Tibial artery (tissue), 4 donors: ENCODE measurements at regions of chr11 and their contacts with region 1.

Region 1: GRCh38 chr11:6251120-6251733 is 8.4 kb upstream of the CCKBR start:
- DNase-seq: peak; percentile 36 to 86
- H3K4me3 ChIP-seq: no peak overlapping the region
- H3K27ac ChIP-seq: no peak overlapping the region
- H3K4me1 ChIP-seq: no peaks in the 10 kb centered on the region
- H3K27me3 ChIP-seq: peaks cover 0 to 5% of the 10 kb centered on the region in 2 donors
- CTCF ChIP-seq: peak; percentile 89 to 92

Region 2: DNA sequence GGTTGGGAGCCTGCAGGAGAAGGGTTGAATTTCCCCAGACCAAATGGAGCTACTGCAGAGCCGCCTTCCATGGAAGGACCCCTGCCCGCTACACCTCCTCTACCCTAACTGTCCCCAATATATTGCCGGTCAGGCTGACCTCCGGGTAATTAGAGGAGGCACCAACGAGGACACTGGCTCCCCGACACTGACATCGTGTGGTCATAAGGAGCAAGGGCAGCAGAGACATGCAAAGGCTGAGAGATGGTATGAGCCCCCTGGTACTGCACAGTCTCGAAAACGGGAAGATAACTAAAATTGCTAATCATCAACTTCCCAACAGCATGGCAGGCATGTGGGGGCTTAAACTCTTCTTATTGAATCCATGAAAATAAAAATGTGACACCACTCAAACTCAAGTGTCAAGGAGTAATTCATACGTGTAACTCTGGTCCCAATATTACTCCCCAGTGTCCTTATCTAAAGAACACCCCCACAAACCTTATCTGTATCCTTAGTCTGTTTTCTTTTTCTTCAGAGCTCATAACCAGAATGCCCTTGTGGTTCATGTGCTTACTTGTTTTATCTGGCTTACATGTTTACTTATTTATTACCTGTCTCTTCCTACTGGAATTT is 64.7 kb after region 1 on chr11:
- intact Hi-C with region 1: loop called (anchors 5 kb)
- DNase-seq: peak; percentile 71 to 76
- H3K4me3 ChIP-seq: peak overlapping the region; percentile 24 to 32
- H3K27ac ChIP-seq: peak overlapping the region; percentile 38 to 100
- H3K4me1 ChIP-seq: peaks cover 0 to 37% (median 24%) of the 10 kb centered on the region in 4 donors
- H3K27me3 ChIP-seq: no peaks in the 10 kb centered on the region
- CTCF ChIP-seq: peak; percentile 83 to 88

Region 3: DNA sequence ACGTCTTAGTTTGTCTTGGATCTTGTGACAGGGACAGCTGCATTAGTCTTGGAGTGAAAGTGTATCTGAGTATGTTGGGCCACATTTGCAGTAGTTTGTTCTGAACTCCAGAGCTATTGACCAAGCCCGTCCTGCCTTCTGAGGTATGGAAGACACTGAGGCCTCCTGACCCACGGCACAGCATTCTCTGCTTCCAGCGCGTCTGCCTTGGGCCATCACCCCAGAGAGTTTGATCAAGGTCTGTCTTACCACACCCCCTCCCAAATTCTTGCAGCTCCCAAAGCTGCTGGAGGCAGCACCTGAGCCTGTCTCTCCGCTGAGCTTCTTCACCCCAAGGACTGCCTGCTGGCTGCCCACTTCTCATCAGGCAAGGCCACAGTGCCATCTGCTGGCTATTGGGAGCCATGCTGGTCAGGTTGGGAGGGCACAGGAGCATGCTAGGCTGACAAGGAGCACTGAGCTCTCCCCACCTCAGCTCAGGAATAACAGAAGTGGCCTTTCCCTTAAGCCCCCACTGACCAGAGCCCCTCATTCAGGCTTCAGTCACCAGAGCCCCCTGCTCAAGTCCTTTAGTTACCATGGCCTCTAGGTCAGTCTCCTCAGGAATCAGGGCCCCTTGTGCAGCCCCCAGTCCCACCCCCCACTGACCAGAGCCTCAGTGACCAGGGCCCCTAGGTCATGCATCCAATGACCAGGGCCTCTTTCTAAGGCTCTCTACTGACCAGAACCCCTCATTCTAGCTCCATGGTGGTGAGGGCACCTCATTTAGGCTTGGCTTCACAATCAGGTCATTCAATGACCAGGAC is 111.8 kb after region 1 on chr11:
- intact Hi-C with region 1: loop called (anchors 5 kb)
- DNase-seq: peak; percentile 85 to 90
- H3K4me3 ChIP-seq: peak overlapping the region in 1 of 2 donors; percentile 3
- H3K27ac ChIP-seq: peak overlapping the region; percentile 66 to 83
- H3K4me1 ChIP-seq: peaks cover 0 to 32% (median 18%) of the 10 kb centered on the region in 4 donors
- H3K27me3 ChIP-seq: no peaks in the 10 kb centered on the region
- CTCF ChIP-seq: peak; percentile 87 to 90

Region 4: GRCh38 chr11:6531267-6531752 is 280.1 kb after region 1 on chr11:
- intact Hi-C with region 1: no loop called
- DNase-seq: no peak
- H3K4me3 ChIP-seq: no peak overlapping the region
- H3K27ac ChIP-seq: no peak overlapping the region
- H3K4me1 ChIP-seq: no peaks in the 10 kb centered on the region
- H3K27me3 ChIP-seq: no peaks in the 10 kb centered on the region
- CTCF ChIP-seq: peak; percentile 78 to 80